Transverse colon (tissue), 4 donors: ENCODE measurements at regions of chr21 and their contacts with region 1.

Region 1: GRCh38 chr21:38355992-38356797 is 99.4 kb downstream of the KCNJ15 start:
- DNase-seq: peak; percentile 82
- H3K4me3 ChIP-seq: no peak overlapping the region
- H3K27ac ChIP-seq: no peak overlapping the region
- H3K4me1 ChIP-seq: peaks cover 0 to 9% (median 2%) of the 10 kb centered on the region in 4 donors
- H3K27me3 ChIP-seq: peaks cover 19% of the 10 kb centered on the region
- CTCF ChIP-seq: peak; percentile 84 to 93 (median 91)
- EP300 ChIP-seq: no peak
- POLR2A ChIP-seq: no peak

Region 2: GRCh38 chr21:37675202-37675801 is 680.9 kb before region 1 on chr21:
- in situ Hi-C with region 1: loop called in 1 of 4 experiments (anchors 25 kb)
- intact Hi-C with region 1: no loop called
- DNase-seq: peak; percentile 45
- H3K4me3 ChIP-seq: no peak overlapping the region
- H3K27ac ChIP-seq: no peak overlapping the region
- H3K4me1 ChIP-seq: peaks cover 0 to 3% (median 1%) of the 10 kb centered on the region in 4 donors
- H3K27me3 ChIP-seq: peaks cover 24% of the 10 kb centered on the region
- CTCF ChIP-seq: peak; percentile 62 to 94 (median 93)
- EP300 ChIP-seq: no peak
- POLR2A ChIP-seq: no peak

Region 3: DNA sequence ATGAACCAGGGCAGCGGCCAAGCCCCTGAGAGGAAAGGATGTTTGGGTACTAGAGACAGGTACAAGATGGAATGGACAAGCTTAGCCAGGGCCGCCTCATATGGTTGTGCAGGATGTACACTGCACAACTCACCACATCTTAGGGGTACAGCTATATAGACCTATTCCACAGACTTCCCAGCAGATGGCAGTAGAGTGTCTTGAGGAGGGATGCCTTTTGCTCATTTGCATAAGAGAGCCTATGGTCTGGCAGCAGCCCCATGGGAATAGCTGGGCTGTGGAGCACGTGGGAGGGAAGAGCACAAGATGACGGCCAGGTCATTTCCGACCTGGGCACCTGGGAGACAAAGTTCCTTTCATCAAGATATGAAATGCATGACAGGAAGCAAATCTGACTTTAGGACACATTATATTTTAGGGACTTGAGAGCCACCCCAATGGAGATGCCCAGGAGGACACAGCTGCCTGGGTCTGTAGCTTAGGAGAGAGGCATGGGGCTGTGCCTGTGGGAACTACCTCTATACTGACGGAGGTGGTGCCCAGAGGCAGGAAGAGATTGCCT is 655.5 kb before region 1 on chr21:
- in situ Hi-C with region 1: loop called in 3 of 4 experiments (anchors 25 kb)
- intact Hi-C with region 1: no loop called
- DNase-seq: no peak
- H3K4me3 ChIP-seq: no peak overlapping the region
- H3K27ac ChIP-seq: no peak overlapping the region
- H3K4me1 ChIP-seq: no peaks in the 10 kb centered on the region
- H3K27me3 ChIP-seq: no peaks in the 10 kb centered on the region
- CTCF ChIP-seq: peak; percentile 29 to 51 (median 44)
- EP300 ChIP-seq: no peak
- POLR2A ChIP-seq: no peak

Region 4: DNA sequence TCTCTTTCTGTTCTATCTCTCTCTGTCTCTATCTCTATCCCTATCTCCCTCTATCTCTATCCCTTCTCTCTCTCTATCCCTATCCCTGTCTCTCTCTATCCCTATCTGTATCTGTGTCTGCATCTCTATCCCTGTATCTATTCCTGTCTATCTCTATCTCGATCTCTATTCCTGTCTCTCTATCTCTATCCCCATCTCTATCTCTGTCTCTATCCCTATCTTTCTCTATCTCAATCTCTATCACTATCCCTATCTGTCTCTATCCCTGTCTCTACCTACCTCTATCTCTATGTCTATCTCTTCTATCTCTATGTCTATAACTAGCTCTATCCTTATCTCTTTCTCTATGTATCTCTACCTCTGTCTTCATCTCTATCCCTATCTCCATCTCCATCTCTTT is 298.6 kb before region 1 on chr21:
- in situ Hi-C with region 1: no loop called
- intact Hi-C with region 1: no loop called
- DNase-seq: no peak
- H3K4me3 ChIP-seq: no peak overlapping the region
- H3K27ac ChIP-seq: no peak overlapping the region
- H3K4me1 ChIP-seq: no peaks in the 10 kb centered on the region
- H3K27me3 ChIP-seq: no peaks in the 10 kb centered on the region
- CTCF ChIP-seq: no peak
- EP300 ChIP-seq: no peak
- POLR2A ChIP-seq: no peak

Region 5: DNA sequence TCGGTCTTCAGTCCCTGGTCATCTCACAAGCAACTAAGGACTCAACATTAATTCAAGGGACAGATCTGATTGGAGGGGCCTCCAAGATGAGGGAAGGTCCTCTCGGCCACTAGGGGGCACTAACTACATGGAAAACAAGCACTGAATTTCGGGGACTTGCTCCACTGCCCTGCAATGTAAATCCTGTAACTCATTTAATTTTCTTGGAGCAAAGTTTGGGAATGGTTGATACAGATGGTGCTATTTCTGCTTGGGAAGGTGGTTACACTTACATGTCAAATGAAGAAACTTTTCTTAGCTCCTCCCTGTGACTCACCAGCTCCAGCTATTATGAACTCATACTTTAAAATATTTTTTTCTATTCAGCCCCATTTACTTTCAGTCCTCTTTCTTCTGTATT is 196.8 kb before region 1 on chr21:
- in situ Hi-C with region 1: loop called in 2 of 4 experiments (anchors 5 kb)
- intact Hi-C with region 1: no loop called
- DNase-seq: peak; percentile 58
- H3K4me3 ChIP-seq: no peak overlapping the region
- H3K27ac ChIP-seq: no peak overlapping the region
- H3K4me1 ChIP-seq: no peaks in the 10 kb centered on the region
- H3K27me3 ChIP-seq: peaks cover 9% of the 10 kb centered on the region
- CTCF ChIP-seq: peak; percentile 52 to 75 (median 70)
- EP300 ChIP-seq: no peak
- POLR2A ChIP-seq: no peak

Region 6: GRCh38 chr21:38165466-38166172 is 190.6 kb before region 1 on chr21:
- in situ Hi-C with region 1: loop called in 2 of 4 experiments (anchors 5 kb)
- intact Hi-C with region 1: no loop called
- DNase-seq: no peak
- H3K4me3 ChIP-seq: no peak overlapping the region
- H3K27ac ChIP-seq: no peak overlapping the region
- H3K4me1 ChIP-seq: no peaks in the 10 kb centered on the region
- H3K27me3 ChIP-seq: no peaks in the 10 kb centered on the region
- CTCF ChIP-seq: no peak
- EP300 ChIP-seq: no peak
- POLR2A ChIP-seq: no peak

Region 7: GRCh38 chr21:38211321-38211720 is 144.9 kb before region 1 on chr21:
- in situ Hi-C with region 1: loop called (anchors 5 to 10 kb)
- intact Hi-C with region 1: no loop called
- DNase-seq: no peak
- H3K4me3 ChIP-seq: no peak overlapping the region
- H3K27ac ChIP-seq: no peak overlapping the region
- H3K4me1 ChIP-seq: no peaks in the 10 kb centered on the region
- H3K27me3 ChIP-seq: peaks cover 35% of the 10 kb centered on the region
- CTCF ChIP-seq: no peak
- EP300 ChIP-seq: no peak
- POLR2A ChIP-seq: no peak

Region 8: DNA sequence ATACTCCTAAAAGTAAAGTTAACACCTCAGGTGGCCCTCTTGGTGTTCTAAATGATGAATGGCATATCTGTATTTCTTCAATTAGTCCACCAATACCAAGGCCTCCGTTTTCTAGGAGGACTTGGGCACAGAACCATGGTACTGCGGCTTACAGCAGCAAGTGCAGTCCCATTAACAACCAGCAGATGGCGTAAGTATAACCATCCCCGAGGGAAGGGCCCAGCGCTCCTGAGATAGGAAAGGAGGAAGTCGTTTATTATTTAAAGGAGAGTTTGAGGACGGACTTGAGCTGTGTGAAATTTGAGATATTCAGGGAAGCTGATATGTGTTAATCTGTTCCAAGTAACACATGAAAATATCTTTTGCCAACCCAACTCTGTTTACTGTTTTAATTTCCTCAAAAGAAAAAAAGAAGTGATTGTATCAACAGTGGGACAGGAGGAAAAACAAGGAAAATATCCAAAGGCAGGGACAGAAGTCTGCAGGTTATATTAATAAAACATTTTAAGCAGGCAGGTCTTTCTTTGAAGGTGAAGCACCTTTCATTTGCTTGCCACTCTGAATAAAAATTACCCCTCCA is 137.1 kb before region 1 on chr21:
- in situ Hi-C with region 1: loop called (anchors 5 to 10 kb)
- intact Hi-C with region 1: loop called (anchors 5 kb)
- DNase-seq: peak; percentile 74
- H3K4me3 ChIP-seq: no peak overlapping the region
- H3K27ac ChIP-seq: no peak overlapping the region
- H3K4me1 ChIP-seq: peaks cover 0 to 3% (median 0%) of the 10 kb centered on the region in 4 donors
- H3K27me3 ChIP-seq: no peaks in the 10 kb centered on the region
- CTCF ChIP-seq: peak; percentile 92 to 97 (median 96)
- EP300 ChIP-seq: no peak
- POLR2A ChIP-seq: no peak

Region 9: DNA sequence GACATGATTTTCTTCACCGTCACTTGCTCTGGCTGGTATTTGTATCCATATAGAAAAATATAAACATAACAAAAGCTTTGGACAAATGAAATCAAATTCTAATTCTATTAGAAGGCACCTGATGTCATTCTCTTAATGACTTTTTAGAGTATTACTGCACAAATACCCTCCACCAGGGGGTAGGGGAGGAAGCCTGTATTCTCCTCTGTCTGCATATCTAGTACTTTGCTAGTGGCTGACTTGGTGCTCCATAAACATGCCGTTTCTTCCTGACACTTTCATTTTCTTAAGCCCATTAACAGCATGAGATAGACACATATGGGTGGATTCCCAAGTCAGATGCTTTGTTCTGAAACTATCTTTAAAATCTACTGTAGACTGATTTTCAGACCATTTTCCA is 120.0 kb before region 1 on chr21:
- in situ Hi-C with region 1: no loop called
- intact Hi-C with region 1: no loop called
- DNase-seq: no peak
- H3K4me3 ChIP-seq: no peak overlapping the region
- H3K27ac ChIP-seq: no peak overlapping the region
- H3K4me1 ChIP-seq: peaks cover 0 to 3% (median 0%) of the 10 kb centered on the region in 4 donors
- H3K27me3 ChIP-seq: no peaks in the 10 kb centered on the region
- CTCF ChIP-seq: no peak
- EP300 ChIP-seq: no peak
- POLR2A ChIP-seq: no peak